Endothelial cell of umbilical vein (primary cell): ENCODE measurements at regions of chr1 and their contacts with region 1.

Region 1: DNA sequence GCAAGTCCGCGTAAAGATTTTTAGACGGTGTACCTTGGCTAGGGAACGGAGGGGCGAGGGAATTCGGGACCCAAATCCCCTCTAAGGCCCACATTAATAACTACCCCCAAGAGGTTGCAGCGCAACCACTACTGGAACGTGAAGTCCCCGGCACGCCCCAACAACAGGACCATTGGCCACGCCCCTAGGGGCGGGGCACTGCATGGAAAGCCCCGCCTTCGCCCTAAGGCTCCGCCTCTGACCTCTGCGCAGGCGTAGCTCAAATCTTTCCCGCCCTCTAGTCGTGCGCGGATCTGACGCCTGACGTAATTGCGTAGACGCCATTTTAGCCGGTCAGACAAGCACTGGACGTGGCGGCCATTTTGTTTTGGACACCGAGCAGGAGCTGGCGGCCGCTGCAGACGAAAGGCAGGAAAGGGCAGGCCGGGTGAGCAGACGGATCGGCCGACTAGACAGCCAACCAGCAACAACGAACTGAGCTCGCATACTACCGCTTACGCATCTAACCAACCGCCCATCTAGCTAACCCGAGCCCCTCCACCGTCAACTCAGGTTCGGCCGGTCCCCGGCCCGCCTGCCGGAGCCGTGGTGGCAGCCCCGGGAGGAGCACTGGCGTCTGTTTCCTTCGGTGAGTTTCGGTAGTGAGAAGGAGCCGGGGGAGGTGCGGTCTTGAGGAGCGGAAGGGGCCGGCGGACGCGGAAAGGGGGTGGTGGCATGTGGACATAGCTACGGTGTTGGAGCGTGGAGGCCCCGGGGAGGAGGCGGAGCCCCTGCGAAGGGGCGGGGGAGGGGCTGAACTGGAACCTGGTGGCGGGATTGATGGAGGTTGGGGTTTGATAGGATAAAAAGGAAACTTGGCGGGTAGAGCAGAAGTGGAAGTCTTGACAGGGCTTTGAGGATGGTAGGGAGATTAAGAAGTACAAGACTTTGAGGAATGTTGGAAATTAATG is at the start of gene CHTOP:
- DNase-seq: peak; percentile 100
- H3K4me3 ChIP-seq: peak within 1 kb of the TSS; percentile 65 to 96 (median 93)
- H3K27ac ChIP-seq: peak within 1 kb of the TSS; percentile 94
- H3K4me1 ChIP-seq: peaks cover 11% of the 10 kb centered on the region
- H3K27me3 ChIP-seq: no peaks in the 10 kb centered on the region
- CTCF ChIP-seq: no peak
- POLR2A ChIP-seq: peak; percentile 78
- total RNA-seq, gene CHTOP: 72.1 and 74.4 TPM in 2 replicates

Region 2: GRCh38 chr1:153566440-153567379 is 67.3 kb before region 1 on chr1:
- CTCF ChIA-PET with region 1: interaction called, 145 read pairs
- POLR2A ChIA-PET with region 1: interaction called, 11 read pairs
- dilution Hi-C with region 1: no loop called
- intact Hi-C with region 1: no loop called
- DNase-seq: peak; percentile 96
- H3K4me3 ChIP-seq: no peak overlapping the region
- H3K27ac ChIP-seq: peak overlapping the region; percentile 99
- H3K4me1 ChIP-seq: peaks cover 34% of the 10 kb centered on the region
- H3K27me3 ChIP-seq: no peaks in the 10 kb centered on the region
- CTCF ChIP-seq: no peak
- POLR2A ChIP-seq: no peak

Region 3: GRCh38 chr1:153617675-153618074 is 16.3 kb before region 1 on chr1:
- CTCF ChIA-PET with region 1: interaction called, 27 read pairs
- POLR2A ChIA-PET with region 1: interaction called, 12 read pairs
- dilution Hi-C with region 1: no loop called
- intact Hi-C with region 1: no loop called
- DNase-seq: peak; percentile 57
- H3K4me3 ChIP-seq: no peak overlapping the region
- H3K27ac ChIP-seq: no peak overlapping the region
- H3K4me1 ChIP-seq: no peaks in the 10 kb centered on the region
- H3K27me3 ChIP-seq: no peaks in the 10 kb centered on the region
- CTCF ChIP-seq: peak; percentile 65 to 75
- POLR2A ChIP-seq: peak; percentile 55

Region 4: GRCh38 chr1:153658400-153659174 is 24.6 kb after region 1 on chr1 and contains the start of gene SNAPIN:
- CTCF ChIA-PET with region 1: no interaction called
- POLR2A ChIA-PET with region 1: interaction called, 5 read pairs
- dilution Hi-C with region 1: no loop called
- intact Hi-C with region 1: loop called (anchors 2 kb)
- DNase-seq: peak; percentile 83
- H3K4me3 ChIP-seq: peak within 1 kb of the TSS; percentile 79 to 91 (median 83)
- H3K27ac ChIP-seq: peak within 1 kb of the TSS; percentile 64
- H3K4me1 ChIP-seq: peaks cover 7% of the 10 kb centered on the region
- H3K27me3 ChIP-seq: no peaks in the 10 kb centered on the region
- CTCF ChIP-seq: peak in 1 of 2 donors; percentile 21
- POLR2A ChIP-seq: peak; percentile 82
- total RNA-seq, gene SNAPIN: 36.5 and 36.8 TPM in 2 replicates

Region 5: DNA sequence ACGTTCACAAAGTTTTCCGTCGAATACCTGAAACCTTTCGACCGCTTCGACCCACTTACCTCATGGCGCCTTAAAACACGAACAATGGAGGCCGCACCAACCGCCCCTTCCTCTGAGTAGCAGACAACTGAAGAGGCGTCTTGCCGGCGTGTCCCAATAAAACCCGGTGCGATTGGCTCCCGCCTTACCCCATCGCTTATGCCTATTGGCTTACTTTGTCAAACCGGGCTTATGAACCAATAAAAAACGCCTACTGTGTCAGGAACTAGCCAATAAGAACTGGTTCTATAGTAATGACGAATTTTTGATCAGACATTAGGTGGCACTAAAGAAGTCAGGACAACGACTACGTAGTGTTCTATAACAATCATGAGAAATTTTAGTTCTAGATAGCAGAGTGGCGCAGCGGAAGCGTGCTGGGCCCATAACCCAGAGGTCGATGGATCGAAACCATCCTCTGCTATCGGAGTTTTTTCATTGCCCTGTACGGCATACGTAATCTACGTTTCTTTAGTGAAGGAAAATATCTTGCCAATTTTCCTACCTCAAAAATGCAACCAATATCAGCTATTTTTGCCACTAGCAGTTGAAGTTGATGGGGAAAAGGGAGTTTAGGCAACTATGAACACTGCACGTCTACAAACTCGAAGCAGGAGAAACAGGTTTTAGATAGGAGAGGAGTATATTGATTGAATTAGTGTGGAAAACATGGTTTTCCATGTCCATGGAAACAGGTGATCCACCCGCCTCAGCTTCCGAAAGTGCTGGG is 37.1 kb after region 1 on chr1 and contains the start of gene ILF2:
- CTCF ChIA-PET with region 1: interaction called, 7 read pairs
- POLR2A ChIA-PET with region 1: interaction called, 4 read pairs
- dilution Hi-C with region 1: no loop called
- intact Hi-C with region 1: loop called (anchors 5 kb)
- DNase-seq: peak; percentile 100
- H3K4me3 ChIP-seq: peak within 1 kb of the TSS; percentile 69 to 98 (median 92)
- H3K27ac ChIP-seq: peak within 1 kb of the TSS; percentile 85
- H3K4me1 ChIP-seq: peaks cover 11% of the 10 kb centered on the region
- H3K27me3 ChIP-seq: no peaks in the 10 kb centered on the region
- CTCF ChIP-seq: no peak
- POLR2A ChIP-seq: peak; percentile 95
- total RNA-seq, gene ILF2: 271 TPM in 2 replicates